Mammary epithelial cell (primary cell): ENCODE measurements at regions of chr16 and their contacts with region 1.

Region 1: DNA sequence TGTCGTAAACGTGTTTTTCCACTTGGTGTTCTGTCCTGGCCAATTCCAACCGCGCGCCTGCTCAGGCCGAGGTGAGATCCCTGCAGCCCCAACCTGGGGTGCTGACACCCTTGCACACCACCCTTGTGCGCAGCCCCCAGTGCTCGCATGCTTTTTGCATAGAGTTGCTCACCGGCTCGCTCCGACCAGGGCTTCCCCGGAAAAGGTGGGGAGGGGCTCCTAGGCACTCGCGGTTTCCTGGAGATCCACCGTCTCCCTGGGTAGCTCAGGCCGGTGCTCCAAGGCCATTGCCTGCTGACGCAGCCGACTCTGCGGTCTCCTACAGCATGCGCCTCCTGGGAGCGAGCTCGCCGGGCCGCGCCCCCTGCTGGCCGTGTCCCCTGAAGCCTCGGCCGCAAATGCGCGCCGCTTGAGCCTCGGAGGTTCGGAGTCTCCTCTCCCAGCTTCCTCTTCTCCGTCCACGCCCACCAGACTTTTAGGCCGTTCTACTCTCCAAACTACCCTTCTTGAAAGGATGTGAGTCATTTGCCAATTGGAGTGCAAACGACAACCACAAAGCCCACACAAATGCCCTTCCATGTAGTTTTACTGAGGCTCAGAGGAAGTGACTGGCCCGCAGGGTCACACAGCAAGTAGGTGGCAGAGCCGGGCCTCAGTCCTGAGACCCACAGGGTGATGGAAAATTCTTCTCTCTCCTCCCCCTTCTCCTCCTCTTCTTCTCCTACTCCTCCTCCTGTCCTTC is 7.2 kb upstream of the PDP2 start:
- DNase-seq: peak; percentile 100
- H3K4me3 ChIP-seq: peak overlapping the region in 2 of 3 experiments; percentile 32 to 42
- H3K27ac ChIP-seq: no peak overlapping the region
- H3K4me1 ChIP-seq: peaks cover 14% of the 10 kb centered on the region
- H3K27me3 ChIP-seq: no peaks in the 10 kb centered on the region
- CTCF ChIP-seq: peak; percentile 87 to 95

Region 2: DNA sequence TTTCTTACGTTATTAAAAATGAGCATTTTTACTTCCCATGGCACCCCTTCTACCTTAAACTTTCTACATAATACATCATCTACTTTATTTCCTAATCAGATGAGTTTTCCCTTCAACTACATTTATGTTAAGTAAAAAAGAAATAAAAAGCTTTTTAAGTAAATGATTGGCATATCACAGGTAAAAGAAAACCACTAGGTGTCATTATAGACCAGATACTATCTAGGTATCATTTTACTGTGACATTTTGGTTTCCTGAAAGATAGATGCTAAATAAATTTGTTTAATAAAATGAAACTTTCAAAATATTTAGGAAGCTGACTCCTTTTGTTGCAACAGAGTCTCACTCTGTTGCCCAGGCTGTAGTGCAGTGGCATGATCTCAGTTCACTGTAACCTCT is 310.7 kb before region 1 on chr16:
- CTCF ChIA-PET with region 1: no interaction called
- dilution Hi-C with region 1: no loop called
- in situ Hi-C with region 1: no loop called
- intact Hi-C with region 1: loop called (anchors 5 kb)
- DNase-seq: no peak
- H3K4me3 ChIP-seq: no peak overlapping the region
- H3K27ac ChIP-seq: no peak overlapping the region
- H3K4me1 ChIP-seq: no peaks in the 10 kb centered on the region
- H3K27me3 ChIP-seq: no peaks in the 10 kb centered on the region
- CTCF ChIP-seq: peak in 1 of 2 donors; percentile 38

Region 3: DNA sequence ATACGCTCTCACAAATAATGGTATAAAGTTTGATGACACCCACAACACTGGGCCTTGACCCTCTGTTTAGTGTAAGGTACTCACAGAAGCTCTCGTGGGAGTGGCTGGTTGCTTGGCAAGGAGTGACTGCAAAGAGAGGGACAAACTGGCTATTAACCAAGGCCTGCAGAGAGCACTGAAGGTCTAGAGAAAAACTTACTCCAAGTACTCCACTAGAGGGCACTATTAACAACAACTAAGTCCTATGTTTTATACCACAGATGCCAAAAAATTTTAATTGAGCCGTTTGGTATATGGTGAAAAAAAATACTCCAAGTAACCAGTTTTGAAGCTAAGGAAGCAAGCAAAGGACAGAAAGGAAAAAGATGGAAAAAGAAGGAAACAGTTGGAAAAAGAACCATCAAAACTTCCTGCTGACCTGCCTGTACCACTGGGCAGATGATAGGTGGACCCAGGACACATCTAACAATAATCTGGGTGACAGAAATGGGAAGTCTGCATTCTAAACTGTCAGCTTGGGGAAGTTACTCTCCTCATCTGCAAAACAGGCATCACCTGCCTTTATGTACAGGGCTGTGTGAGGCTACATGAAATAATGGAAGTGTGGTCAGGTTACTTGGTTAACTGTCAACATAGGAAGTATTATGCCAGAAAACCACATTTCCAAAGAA is 144.9 kb before region 1 on chr16:
- CTCF ChIA-PET with region 1: no interaction called
- dilution Hi-C with region 1: no loop called
- in situ Hi-C with region 1: no loop called
- intact Hi-C with region 1: loop called (anchors 1 kb)
- DNase-seq: peak; percentile 26
- H3K4me3 ChIP-seq: no peak overlapping the region
- H3K27ac ChIP-seq: no peak overlapping the region
- H3K4me1 ChIP-seq: no peaks in the 10 kb centered on the region
- H3K27me3 ChIP-seq: no peaks in the 10 kb centered on the region
- CTCF ChIP-seq: peak; percentile 47 to 58

Region 4: DNA sequence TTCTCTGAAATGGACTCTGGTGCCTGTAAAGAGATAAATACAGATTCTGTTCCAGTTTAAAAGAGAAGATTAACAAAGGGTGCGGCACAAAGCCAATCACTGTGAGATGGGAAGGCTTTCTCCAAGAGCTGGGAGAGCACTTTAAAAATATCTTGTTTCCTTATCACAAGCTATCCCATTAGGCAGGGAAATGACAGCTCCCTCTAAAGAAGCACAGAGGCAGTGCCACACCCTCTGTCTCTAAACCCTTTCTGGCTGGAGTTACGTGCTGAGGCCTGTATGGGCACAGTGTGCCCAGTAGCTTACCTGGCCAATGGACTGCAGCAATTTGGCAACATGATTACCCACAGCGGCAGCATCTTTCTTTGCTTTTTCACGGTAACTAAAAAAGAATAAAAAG is 62.7 kb before region 1 on chr16:
- CTCF ChIA-PET with region 1: interaction called, 11 read pairs
- dilution Hi-C with region 1: no loop called
- in situ Hi-C with region 1: no loop called
- intact Hi-C with region 1: no loop called
- DNase-seq: peak; percentile 58
- H3K4me3 ChIP-seq: no peak overlapping the region
- H3K27ac ChIP-seq: no peak overlapping the region
- H3K4me1 ChIP-seq: peaks cover 10% of the 10 kb centered on the region
- H3K27me3 ChIP-seq: no peaks in the 10 kb centered on the region
- CTCF ChIP-seq: peak in 1 of 2 donors; percentile 23

Region 5: GRCh38 chr16:66830422-66831404 is 42.4 kb before region 1 on chr16 and contains the start of gene NAE1:
- CTCF ChIA-PET with region 1: interaction called, 25 read pairs
- dilution Hi-C with region 1: no loop called
- in situ Hi-C with region 1: no loop called
- intact Hi-C with region 1: loop called (anchors 1 kb)
- DNase-seq: peak; percentile 83
- H3K4me3 ChIP-seq: peak within 1 kb of the TSS; percentile 73 to 80 (median 77)
- H3K27ac ChIP-seq: peak within 1 kb of the TSS; percentile 76
- H3K4me1 ChIP-seq: peaks cover 11% of the 10 kb centered on the region
- H3K27me3 ChIP-seq: no peaks in the 10 kb centered on the region
- CTCF ChIP-seq: peak; percentile 91 to 97
- total RNA-seq, gene NAE1: 66.5 to 81.1 TPM

Region 6: GRCh38 chr16:66910175-66910940 is 37.2 kb after region 1 on chr16:
- CTCF ChIA-PET with region 1: interaction called, 23 read pairs
- dilution Hi-C with region 1: no loop called
- in situ Hi-C with region 1: no loop called
- intact Hi-C with region 1: no loop called
- DNase-seq: no peak
- H3K4me3 ChIP-seq: no peak overlapping the region
- H3K27ac ChIP-seq: no peak overlapping the region
- H3K4me1 ChIP-seq: peaks cover 13% of the 10 kb centered on the region
- H3K27me3 ChIP-seq: no peaks in the 10 kb centered on the region
- CTCF ChIP-seq: no peak

Region 7: GRCh38 chr16:67349172-67349571 is 476.1 kb after region 1 on chr16:
- CTCF ChIA-PET with region 1: no interaction called
- dilution Hi-C with region 1: no loop called
- in situ Hi-C with region 1: no loop called
- intact Hi-C with region 1: no loop called
- DNase-seq: peak; percentile 20
- H3K4me3 ChIP-seq: no peak overlapping the region
- H3K27ac ChIP-seq: no peak overlapping the region
- H3K4me1 ChIP-seq: no peaks in the 10 kb centered on the region
- H3K27me3 ChIP-seq: no peaks in the 10 kb centered on the region
- CTCF ChIP-seq: peak; percentile 52 to 55